ENCODE measurements at regions of chr6 and their contacts with region 1.

Region 1: GRCh38 chr6:161370880-161371279 is 97.0 kb upstream of the AGPAT4 start:
- DNase-seq: peak; percentile 71 to 75
- H3K4me3 ChIP-seq: no peak overlapping the region
- H3K4me1 ChIP-seq: no peaks in the 10 kb centered on the region
- H3K27me3 ChIP-seq: no peaks in the 10 kb centered on the region

Region 2: GRCh38 chr6:160749222-160749826 is 621.6 kb before region 1 on chr6:
- in situ Hi-C with region 1: loop called (anchors 5 kb)
- DNase-seq: no peak
- H3K4me3 ChIP-seq: no peak overlapping the region
- H3K4me1 ChIP-seq: no peaks in the 10 kb centered on the region
- H3K27me3 ChIP-seq: no peaks in the 10 kb centered on the region; the same call in 1 of the 2 replicates

Region 3: GRCh38 chr6:160930547-160931377 is 440.1 kb before region 1 on chr6:
- in situ Hi-C with region 1: loop called (anchors 5 kb)
- DNase-seq: peak; percentile 63 to 88
- H3K4me3 ChIP-seq: peak overlapping the region; percentile 20
- H3K4me1 ChIP-seq: no peaks in the 10 kb centered on the region; the same call in 1 of the 2 replicates
- H3K27me3 ChIP-seq: 0 out of 2 replicates have a peak, but pooled peaks cover 3% of the 10 kb centered on the region